Activated naive CD4-positive, alpha-beta T cell treated with anti-CD3 and anti-CD28 coated beads for 36 hours (primary cell): ENCODE measurements at regions of chr3 and their contacts with region 1.

Region 1: DNA sequence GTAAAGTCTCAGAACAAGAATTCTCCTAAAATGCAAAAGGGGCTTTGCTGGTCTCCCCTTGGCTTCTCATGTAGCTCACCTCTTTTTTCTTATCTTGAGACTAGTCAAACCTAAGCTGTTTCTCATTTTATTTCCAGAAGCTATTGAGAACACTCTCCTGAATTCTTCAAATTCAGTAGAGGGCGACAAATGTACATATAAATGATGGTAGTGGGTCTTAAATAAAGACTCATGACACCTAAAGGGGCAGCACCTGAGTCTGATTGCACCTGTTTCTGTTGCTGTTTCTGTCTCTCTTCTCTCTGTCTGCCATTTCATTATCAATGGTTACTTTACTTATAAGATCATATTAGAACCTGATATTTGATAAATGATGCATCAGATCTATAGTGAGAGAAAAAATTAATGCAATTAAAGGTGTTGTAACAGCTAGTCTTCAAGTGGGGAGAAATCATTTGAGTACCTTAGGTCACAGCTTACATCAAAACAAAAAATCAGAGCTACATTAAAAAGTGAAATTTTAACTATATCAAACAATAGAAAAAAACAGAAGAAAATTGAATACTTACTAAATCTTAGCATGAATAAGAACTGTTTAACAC is 7.0 kb downstream of the ADIPOQ start:
- DNase-seq: peak; percentile 45
- H3K4me3 Mint-ChIP-seq: no peak overlapping the region
- H3K27ac Mint-ChIP-seq: no peak overlapping the region
- H3K4me1 Mint-ChIP-seq: peaks cover 12% of the 10 kb centered on the region
- H3K27me3 Mint-ChIP-seq: peaks cover 3% of the 10 kb centered on the region

Region 2: GRCh38 chr3:186921578-186921977 is 72.1 kb after region 1 on chr3:
- CTCF ChIA-PET with region 1: interaction called, 12 read pairs
- intact Hi-C with region 1: no loop called
- DNase-seq: no peak
- H3K4me3 Mint-ChIP-seq: no peak overlapping the region
- H3K27ac Mint-ChIP-seq: no peak overlapping the region
- H3K4me1 Mint-ChIP-seq: peaks cover 7% of the 10 kb centered on the region
- H3K27me3 Mint-ChIP-seq: no peaks in the 10 kb centered on the region

Region 3: GRCh38 chr3:187101184-187102072 is 252.0 kb after region 1 on chr3:
- CTCF ChIA-PET with region 1: interaction called, 12 read pairs
- intact Hi-C with region 1: no loop called
- DNase-seq: peak; percentile 67
- H3K4me3 Mint-ChIP-seq: peak overlapping the region; percentile 19
- H3K27ac Mint-ChIP-seq: no peak overlapping the region
- H3K4me1 Mint-ChIP-seq: peaks cover 25% of the 10 kb centered on the region
- H3K27me3 Mint-ChIP-seq: no peaks in the 10 kb centered on the region

Region 4: GRCh38 chr3:187352581-187353575 is 503.4 kb after region 1 on chr3:
- CTCF ChIA-PET with region 1: no interaction called
- intact Hi-C with region 1: no loop called
- DNase-seq: no peak
- H3K4me3 Mint-ChIP-seq: no peak overlapping the region
- H3K27ac Mint-ChIP-seq: no peak overlapping the region
- H3K4me1 Mint-ChIP-seq: no peaks in the 10 kb centered on the region
- H3K27me3 Mint-ChIP-seq: no peaks in the 10 kb centered on the region